ENCODE measurements at regions of chr19 and their contacts with region 1.

Region 1: GRCh38 chr19:2750808-2751443 is 11.1 kb upstream of the SLC39A3 start:
- DNase-seq: no peak
- ATAC-seq: no peak
- H3K4me3 Mint-ChIP-seq: no peak overlapping the region
- H3K27ac Mint-ChIP-seq: no peak overlapping the region
- H3K4me1 Mint-ChIP-seq: no peaks in the 10 kb centered on the region
- H3K27me3 Mint-ChIP-seq: no peaks in the 10 kb centered on the region

Region 2: DNA sequence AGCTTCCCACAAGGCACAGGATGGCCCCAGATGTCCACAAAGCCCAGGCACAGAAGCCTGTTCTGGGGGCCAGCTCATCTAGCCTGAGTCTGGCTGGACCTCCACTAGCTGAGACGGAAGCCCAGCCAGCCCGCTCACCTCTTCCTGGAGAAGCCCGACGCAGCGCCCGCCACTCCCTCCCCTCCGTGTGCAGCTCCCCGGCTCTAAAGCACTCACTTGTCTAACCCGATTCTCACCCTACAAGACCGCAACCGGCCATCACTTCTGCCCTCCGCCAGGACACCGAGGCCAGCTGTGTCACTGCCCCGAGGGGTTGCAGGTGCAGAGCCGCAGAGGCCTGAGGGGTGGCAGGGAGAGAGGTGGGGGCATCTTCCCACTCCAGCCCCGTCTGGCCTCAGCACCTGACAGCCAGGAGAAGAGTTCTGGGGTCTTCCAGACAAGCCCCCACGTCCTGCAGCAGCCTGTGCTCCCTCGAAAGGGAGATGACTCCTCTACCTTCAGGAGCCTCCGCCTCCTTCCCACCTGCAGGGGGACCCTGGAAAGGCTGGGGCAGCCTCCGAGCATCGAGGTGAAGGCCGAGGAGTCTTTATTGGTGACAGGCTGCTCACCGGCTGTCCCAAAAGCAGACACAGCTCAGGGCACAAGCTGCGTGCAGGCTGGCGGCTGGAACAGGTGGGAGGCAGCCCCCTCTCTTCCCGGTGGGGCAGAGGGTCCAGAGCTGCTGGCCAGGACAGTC is 23.9 kb before region 1 on chr19:
- CTCF ChIA-PET with region 1: interaction called, 10 read pairs
- DNase-seq: no peak
- ATAC-seq: no peak
- H3K4me3 Mint-ChIP-seq: no peak overlapping the region
- H3K27ac Mint-ChIP-seq: no peak overlapping the region
- H3K4me1 Mint-ChIP-seq: peaks cover 2% of the 10 kb centered on the region
- H3K27me3 Mint-ChIP-seq: peaks cover 20% of the 10 kb centered on the region

Region 3: GRCh38 chr19:2739602-2740313 is 11.2 kb before region 1 on chr19 and contains the start of gene SLC39A3:
- CTCF ChIA-PET with region 1: interaction called, 15 read pairs
- DNase-seq: peak; percentile 99
- ATAC-seq: peak; percentile 99
- H3K4me3 Mint-ChIP-seq: peak within 1 kb of the TSS; percentile 87
- H3K27ac Mint-ChIP-seq: peak within 1 kb of the TSS; percentile 76
- H3K4me1 Mint-ChIP-seq: peaks cover 14% of the 10 kb centered on the region
- H3K27me3 Mint-ChIP-seq: peaks cover 12% of the 10 kb centered on the region
- total RNA-seq, gene SLC39A3: 36.9 to 41.3 TPM

Measured in activated CD8-positive, alpha-beta memory T cell treated with anti-CD3 and anti-CD28 coated beads, Interleukin-2, amount 10 ng/mL, durations not matched to agents 7 days and 5 days (primary cell).